WTC11 (cell line): ENCODE measurements at regions of chr15 and their contacts with region 1.

Region 1: DNA sequence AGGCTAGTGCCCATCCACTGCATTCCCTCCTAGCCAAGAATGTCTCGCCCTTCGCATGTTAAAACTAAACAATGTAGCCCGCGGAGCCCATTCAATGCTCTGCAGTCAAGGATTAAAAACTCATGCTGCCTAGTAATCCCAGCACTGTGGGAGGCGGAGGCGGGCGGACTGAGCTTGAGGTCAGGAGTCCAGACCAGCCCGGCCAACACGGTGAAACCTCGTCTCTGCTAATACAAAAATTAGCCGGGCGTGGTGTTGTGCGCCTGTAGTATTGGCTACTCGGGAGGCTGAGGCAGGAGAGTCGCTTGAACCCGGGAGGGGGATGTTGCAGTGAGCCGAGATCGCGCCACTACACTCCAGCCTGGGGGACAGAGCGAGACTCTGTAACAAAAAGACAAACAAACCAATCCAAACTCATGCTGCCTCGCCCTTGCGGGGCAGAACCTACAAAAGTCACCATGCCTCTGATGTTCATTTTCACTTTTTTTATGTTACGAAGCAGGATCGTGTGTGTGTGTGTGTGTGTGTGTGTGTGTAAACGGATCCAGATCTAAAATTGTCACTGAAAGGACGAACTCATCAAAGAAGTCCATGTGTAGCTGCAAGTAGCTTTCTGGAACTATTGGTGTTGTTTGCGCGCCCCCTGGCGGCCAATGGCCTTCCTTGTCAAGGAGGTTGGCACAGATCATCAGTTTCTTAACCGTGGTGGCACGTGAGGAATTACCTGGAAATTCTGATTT is 54.8 kb upstream of the SPESP1 start:
- DNase-seq: peak; percentile 96
- ATAC-seq: peak; percentile 87
- H3K4me3 Mint-ChIP-seq: peak overlapping the region; percentile 76
- H3K27ac Mint-ChIP-seq: no peak overlapping the region
- H3K4me1 Mint-ChIP-seq: peaks cover 9% of the 10 kb centered on the region
- H3K27me3 Mint-ChIP-seq: peaks cover 19% of the 10 kb centered on the region
- CTCF ChIP-seq: peak; percentile 84

Region 2: GRCh38 chr15:68666120-68666811 is 209.3 kb before region 1 on chr15:
- CTCF ChIA-PET with region 1: interaction called, 10 read pairs
- POLR2A ChIA-PET with region 1: no interaction called
- DNase-seq: peak; percentile 24
- ATAC-seq: peak; percentile 93
- H3K4me3 Mint-ChIP-seq: no peak overlapping the region
- H3K27ac Mint-ChIP-seq: no peak overlapping the region; the same call in none of the 2 replicates
- H3K4me1 Mint-ChIP-seq: peaks cover 18% of the 10 kb centered on the region
- H3K27me3 Mint-ChIP-seq: no peaks in the 10 kb centered on the region; the same call in 1 of the 2 replicates
- CTCF ChIP-seq: no peak

Region 3: DNA sequence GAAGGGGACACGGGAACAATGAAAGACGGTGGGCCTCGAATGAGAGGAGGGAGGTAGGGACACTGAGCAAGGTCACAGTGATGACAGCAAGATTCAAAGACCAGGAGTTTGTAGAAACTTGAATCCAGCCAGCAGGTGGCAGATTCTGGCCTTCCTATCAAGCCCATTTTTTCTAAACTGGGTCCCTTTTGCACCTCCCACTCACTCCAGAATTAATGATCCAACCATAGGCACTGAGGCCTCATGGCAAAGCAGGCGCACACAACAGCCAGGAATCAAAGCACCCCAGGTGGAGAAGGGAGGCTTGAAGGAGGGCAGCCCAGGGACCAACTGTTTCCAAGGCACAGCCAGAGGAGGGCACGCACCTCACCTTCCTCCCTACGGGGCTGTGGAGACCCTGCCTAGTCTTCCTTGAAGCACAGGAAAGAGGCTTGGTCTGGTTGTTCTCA is 145.1 kb before region 1 on chr15:
- CTCF ChIA-PET with region 1: interaction called, 37 read pairs
- POLR2A ChIA-PET with region 1: no interaction called
- DNase-seq: peak; percentile 39
- ATAC-seq: peak; percentile 71
- H3K4me3 Mint-ChIP-seq: no peak overlapping the region
- H3K27ac Mint-ChIP-seq: no peak overlapping the region
- H3K4me1 Mint-ChIP-seq: peaks cover 17% of the 10 kb centered on the region
- H3K27me3 Mint-ChIP-seq: peaks cover 3% of the 10 kb centered on the region; the same call in 1 of the 2 replicates
- CTCF ChIP-seq: no peak

Region 4: GRCh38 chr15:68795298-68795848 is 80.2 kb before region 1 on chr15:
- CTCF ChIA-PET with region 1: interaction called, 36 read pairs
- POLR2A ChIA-PET with region 1: no interaction called
- DNase-seq: peak; percentile 91
- ATAC-seq: peak; percentile 95
- H3K4me3 Mint-ChIP-seq: peak overlapping the region; percentile 40
- H3K27ac Mint-ChIP-seq: peak overlapping the region; percentile 99
- H3K4me1 Mint-ChIP-seq: peaks cover 90% of the 10 kb centered on the region
- H3K27me3 Mint-ChIP-seq: no peaks in the 10 kb centered on the region
- CTCF ChIP-seq: no peak

Region 5: GRCh38 chr15:68829068-68829467 is 46.5 kb before region 1 on chr15:
- CTCF ChIA-PET with region 1: interaction called, 16 read pairs
- POLR2A ChIA-PET with region 1: no interaction called
- DNase-seq: no peak
- ATAC-seq: peak; percentile 75
- H3K4me3 Mint-ChIP-seq: no peak overlapping the region
- H3K27ac Mint-ChIP-seq: no peak overlapping the region
- H3K4me1 Mint-ChIP-seq: no peaks in the 10 kb centered on the region; the same call in 1 of the 2 replicates
- H3K27me3 Mint-ChIP-seq: peaks cover 88% of the 10 kb centered on the region
- CTCF ChIP-seq: no peak

Region 6: DNA sequence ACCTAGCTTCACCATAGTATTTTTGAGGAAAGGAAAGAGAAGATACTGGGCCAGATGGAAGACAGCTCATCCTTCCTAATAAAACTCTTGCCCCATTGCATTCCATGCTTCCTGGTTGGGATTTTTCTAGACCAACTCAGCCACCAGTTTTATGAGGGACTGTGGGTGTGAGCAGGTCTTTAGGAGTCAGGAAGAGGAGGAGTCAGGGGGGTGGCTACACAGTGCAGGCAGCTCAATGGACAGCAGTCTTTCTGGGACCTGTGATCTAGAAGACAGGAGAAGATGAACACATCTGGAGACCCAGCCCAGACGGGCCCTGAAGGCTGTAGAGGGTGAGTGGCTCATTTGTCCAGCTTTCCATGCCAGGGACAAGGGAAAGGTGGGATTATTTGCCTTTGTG is 138.9 kb after region 1 on chr15 and contains the start of gene NOX5:
- CTCF ChIA-PET with region 1: no interaction called
- POLR2A ChIA-PET with region 1: no interaction called
- DNase-seq: no peak
- ATAC-seq: no peak
- H3K4me3 Mint-ChIP-seq: no peak within 1 kb of the TSS
- H3K27ac Mint-ChIP-seq: no peak within 1 kb of the TSS
- H3K4me1 Mint-ChIP-seq: peaks cover 4% of the 10 kb centered on the region; the same call in 1 of the 2 replicates
- H3K27me3 Mint-ChIP-seq: peaks cover 10% of the 10 kb centered on the region
- CTCF ChIP-seq: no peak
- total RNA-seq, gene NOX5: not detected in 3 replicates

Region 7: DNA sequence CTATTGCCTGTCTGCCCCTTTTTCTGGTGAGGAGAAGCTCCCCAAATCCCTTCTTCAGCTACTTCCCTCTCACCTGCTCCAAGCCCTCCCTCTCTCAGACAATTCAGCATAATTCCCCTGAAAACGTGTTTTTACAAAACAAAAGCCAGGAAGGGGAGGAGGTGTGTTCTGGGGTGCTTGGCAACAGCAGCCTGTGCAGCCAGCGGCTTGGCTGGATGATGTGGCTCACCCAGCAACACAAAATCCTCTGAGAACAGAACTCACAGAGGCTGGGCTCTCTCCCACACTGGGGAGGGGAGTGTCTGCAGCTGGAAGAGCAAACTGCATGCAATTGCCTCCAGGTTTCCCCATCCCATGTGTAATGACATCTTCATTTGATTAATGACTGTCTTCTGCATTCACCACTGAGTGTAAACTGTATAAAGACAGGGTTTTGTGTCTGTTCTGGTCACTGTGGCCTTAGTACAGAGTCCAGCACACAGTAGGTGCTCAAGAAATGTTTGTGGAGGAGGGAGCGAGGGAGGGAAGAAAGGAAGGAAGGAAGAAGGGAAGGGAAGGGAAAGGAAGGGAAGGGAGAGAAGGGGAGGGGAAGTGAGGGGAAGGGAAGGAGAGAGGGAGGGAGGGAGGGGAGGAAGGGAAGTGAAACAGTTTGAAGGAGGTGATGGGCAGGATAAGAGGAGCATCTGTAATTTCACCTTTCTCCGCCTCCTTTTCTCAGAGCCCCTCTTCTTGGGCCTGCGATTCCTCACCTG is 214.8 kb after region 1 on chr15:
- CTCF ChIA-PET with region 1: no interaction called
- POLR2A ChIA-PET with region 1: no interaction called
- DNase-seq: peak; percentile 70
- ATAC-seq: peak; percentile 55
- H3K4me3 Mint-ChIP-seq: peak overlapping the region; percentile 49
- H3K27ac Mint-ChIP-seq: peak overlapping the region; percentile 99
- H3K4me1 Mint-ChIP-seq: peaks cover 98% of the 10 kb centered on the region
- H3K27me3 Mint-ChIP-seq: peaks cover 9% of the 10 kb centered on the region
- CTCF ChIP-seq: no peak